Right ventricle myocardium superior (tissue), 1 donor: ENCODE measurements at regions of chr15 and their contacts with region 1.

Region 1: DNA sequence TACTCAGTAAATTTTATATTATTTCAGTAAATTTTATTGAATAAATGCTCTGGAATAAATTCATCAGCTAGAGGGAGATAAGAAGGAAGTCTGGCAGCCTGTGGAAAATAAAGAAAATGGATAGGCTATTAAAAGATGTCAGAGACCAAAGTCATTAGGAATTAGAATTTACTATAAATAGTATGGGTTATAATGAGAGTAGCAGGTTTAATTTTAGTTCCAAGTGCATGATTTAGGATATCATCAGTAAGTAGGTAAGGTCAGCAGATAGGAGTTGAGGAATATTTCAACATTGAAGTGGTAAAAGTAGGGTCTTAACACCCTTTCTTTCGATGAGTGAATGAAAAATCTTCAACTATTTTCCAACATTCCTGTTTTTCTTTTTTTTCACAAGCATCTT is 64.6 kb downstream of the SNRPN start:
- DNase-seq: no peak
- ATAC-seq: peak; percentile 46

Region 2: GRCh38 chr15:24761704-24762302 is 257.6 kb before region 1 on chr15:
- intact Hi-C with region 1: loop called (anchors 10 kb)
- DNase-seq: no peak
- ATAC-seq: no peak

Region 3: DNA sequence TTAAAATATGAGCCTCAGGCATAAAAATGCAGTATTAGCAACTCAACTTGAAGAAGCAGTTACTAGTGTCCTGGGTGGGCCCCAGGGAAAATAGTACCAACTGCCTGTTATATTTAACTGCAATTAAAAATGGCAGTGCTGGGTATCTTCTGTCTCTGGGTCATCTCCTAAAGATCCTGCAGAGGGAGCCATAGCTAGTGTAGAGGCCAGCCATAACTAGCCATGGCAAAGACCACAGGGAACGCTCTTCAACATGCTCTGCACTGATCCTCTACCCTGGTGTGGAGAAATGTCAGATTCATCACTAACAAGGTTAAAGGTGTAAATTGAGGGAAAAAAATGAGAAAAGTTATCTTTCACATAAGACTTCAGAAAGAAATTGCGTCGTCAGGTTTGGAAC is 116.7 kb after region 1 on chr15:
- intact Hi-C with region 1: no loop called
- DNase-seq: no peak
- ATAC-seq: peak; percentile 51